SK-N-SH (cell line): ENCODE measurements at regions of chr4 and their contacts with region 1.

Region 1: DNA sequence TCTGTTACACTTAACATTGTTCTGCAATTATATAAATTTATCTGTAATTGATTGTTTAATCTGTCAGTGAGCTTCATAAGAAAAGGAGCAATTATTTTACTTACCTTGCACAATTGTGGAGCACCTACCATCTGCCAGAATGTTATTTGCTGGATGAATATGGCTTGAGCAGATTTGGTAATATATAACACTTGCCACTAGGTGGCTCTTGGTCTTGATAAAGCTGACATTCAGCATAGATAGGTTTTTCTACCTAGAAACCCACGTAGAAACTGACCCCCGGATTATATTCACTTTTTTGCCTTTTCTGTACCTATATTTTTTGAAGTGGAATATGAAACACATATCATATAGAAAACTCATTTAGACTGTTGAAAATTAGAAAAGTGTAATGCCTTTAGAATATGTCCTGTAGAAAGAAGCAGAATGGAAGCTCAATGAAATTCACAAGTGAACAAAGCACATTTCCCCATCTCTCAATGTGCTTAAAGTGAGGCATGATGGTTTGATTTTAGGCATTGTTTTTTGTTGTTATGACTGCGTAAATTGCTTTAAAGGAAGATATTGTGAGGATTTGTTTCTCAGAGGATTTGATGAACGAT is 9.5 kb downstream of the RBPJ start:
- DNase-seq: peak; percentile 51
- H3K4me3 ChIP-seq: no peak overlapping the region
- H3K27ac ChIP-seq: no peak overlapping the region
- H3K4me1 ChIP-seq: no peaks in the 10 kb centered on the region; a peak in 2 of 4 replicates
- H3K27me3 ChIP-seq: no peaks in the 10 kb centered on the region
- CTCF ChIP-seq: peak; percentile 81
- EP300 ChIP-seq: no peak
- RAD21 ChIP-seq: peak; percentile 78

Region 2: DNA sequence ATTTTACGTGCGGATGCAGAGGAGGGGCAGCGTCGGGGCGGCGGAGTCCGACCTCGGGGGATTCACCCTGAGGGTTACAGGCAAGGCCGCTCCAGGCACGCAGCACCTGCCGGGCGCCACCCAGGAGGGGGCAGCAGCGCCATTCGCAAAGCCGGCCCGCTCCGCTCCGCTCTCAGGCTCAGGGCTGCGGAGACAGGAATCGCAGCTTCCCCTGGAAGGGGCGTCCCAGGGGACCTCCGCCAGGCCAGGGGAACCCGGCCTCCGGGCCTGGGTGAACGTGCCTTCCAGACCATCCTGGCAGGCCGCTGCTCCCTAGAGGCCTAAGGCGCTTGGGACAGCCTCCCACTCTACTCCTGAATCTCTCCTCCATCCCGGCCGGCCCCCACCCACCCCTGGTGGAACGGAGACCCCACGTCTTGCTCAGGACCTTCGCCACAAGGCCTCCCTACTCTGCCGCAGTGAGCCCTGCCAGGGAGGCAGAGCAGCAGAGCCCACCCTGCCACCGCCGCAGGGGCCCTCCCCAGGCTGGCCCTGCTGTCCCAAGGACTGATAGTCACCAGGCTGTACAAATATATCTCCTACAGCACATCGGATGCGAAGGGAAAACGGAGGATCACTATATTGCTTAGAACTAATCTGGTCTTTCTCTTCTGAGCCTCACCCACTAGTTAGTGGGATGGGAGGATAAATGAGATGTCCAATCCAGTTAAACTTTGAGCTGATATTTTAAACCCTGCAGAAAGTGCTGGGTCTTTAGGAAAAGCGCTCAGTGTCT is 301.3 kb before region 1 on chr4:
- CTCF ChIA-PET with region 1: interaction called, 11 read pairs
- POLR2A ChIA-PET with region 1: no interaction called
- DNase-seq: peak; percentile 82
- H3K4me3 ChIP-seq: no peak overlapping the region
- H3K27ac ChIP-seq: no peak overlapping the region
- H3K4me1 ChIP-seq: peaks cover 0 to 6% of the 10 kb centered on the region in 2 experiments; a peak in 1 of 4 replicates
- H3K27me3 ChIP-seq: no peaks in the 10 kb centered on the region
- CTCF ChIP-seq: peak; percentile 39
- EP300 ChIP-seq: no peak
- RAD21 ChIP-seq: peak; percentile 77

Region 3: DNA sequence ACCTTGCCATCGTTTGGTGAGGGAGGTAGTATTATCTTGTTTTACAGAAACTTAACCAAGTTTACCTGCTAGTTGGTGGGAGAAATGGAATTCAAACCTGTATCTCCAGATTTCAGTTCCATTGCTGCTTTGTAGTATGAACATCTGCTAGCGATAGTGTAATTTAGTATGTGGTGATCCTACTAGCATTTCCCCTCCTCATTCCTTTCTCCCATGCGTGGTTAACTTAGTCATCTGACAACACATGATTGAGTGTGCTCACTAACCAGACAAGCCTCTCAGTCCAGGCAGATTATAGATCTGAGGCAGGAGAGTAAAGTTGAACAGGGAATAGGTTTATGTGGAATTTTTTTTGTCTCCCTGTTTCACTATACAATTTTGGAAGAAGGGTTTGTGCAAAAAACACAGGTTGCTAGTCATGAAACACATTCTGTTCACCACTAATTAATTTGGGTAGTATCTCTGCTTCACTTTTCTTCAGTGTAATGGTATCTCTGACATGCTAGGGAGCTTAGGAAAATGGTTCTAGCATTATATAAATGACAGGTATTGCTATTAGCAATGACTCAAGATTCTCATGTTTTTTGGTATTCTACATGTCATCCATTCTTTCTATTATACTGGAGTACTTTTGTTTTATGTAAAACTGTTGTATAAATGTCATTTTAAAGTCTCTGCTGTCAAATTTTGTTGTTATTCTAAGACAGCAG is 12.2 kb after region 1 on chr4:
- CTCF ChIA-PET with region 1: interaction called, 65 read pairs
- POLR2A ChIA-PET with region 1: no interaction called
- DNase-seq: no peak
- H3K4me3 ChIP-seq: no peak overlapping the region; a peak in 1 of 4 replicates
- H3K27ac ChIP-seq: peak overlapping the region in 1 of 2 experiments; percentile 66; a peak in 2 of 4 replicates
- H3K4me1 ChIP-seq: peaks cover 0 to 23% of the 10 kb centered on the region in 2 experiments; a peak in 3 of 4 replicates
- H3K27me3 ChIP-seq: no peaks in the 10 kb centered on the region
- CTCF ChIP-seq: no peak
- EP300 ChIP-seq: peak in 1 of 2 experiments; percentile 77; a peak in 2 of 4 replicates
- RAD21 ChIP-seq: no peak

Region 4: GRCh38 chr4:26377328-26378311 is 47.3 kb after region 1 on chr4:
- CTCF ChIA-PET with region 1: interaction called, 13 read pairs
- POLR2A ChIA-PET with region 1: no interaction called
- DNase-seq: no peak
- H3K4me3 ChIP-seq: no peak overlapping the region
- H3K27ac ChIP-seq: no peak overlapping the region
- H3K4me1 ChIP-seq: peaks cover 7 to 8% of the 10 kb centered on the region in 2 experiments; a peak in 3 of 4 replicates
- H3K27me3 ChIP-seq: no peaks in the 10 kb centered on the region
- CTCF ChIP-seq: no peak
- EP300 ChIP-seq: no peak
- RAD21 ChIP-seq: no peak

Region 5: GRCh38 chr4:26402458-26402857 is 72.2 kb after region 1 on chr4:
- CTCF ChIA-PET with region 1: interaction called, 201 read pairs
- POLR2A ChIA-PET with region 1: no interaction called
- DNase-seq: no peak
- H3K4me3 ChIP-seq: no peak overlapping the region
- H3K27ac ChIP-seq: no peak overlapping the region
- H3K4me1 ChIP-seq: no peaks in the 10 kb centered on the region
- H3K27me3 ChIP-seq: no peaks in the 10 kb centered on the region
- CTCF ChIP-seq: no peak
- EP300 ChIP-seq: no peak
- RAD21 ChIP-seq: no peak

Region 6: DNA sequence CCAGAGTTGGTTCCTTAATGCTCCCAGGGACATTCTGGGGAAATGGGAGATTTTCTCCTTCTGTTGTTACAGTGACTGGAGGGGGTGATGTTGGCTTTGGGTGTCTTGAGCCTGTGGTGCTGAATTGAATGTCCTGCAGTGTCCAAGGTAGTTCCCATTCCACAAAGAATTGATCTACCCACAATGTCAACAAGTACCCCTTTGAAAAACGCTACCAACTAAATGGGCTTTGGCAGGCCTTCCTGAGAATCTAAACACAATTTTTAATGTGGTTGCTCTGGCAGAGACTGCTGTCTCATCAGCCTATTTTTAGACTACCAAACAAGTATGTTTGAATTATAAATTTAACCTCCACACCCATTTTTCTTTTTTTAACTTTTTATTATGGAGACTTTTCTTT is 90.6 kb after region 1 on chr4:
- CTCF ChIA-PET with region 1: interaction called, 13 read pairs
- POLR2A ChIA-PET with region 1: no interaction called
- DNase-seq: no peak
- H3K4me3 ChIP-seq: no peak overlapping the region
- H3K27ac ChIP-seq: no peak overlapping the region; a peak in 1 of 4 replicates
- H3K4me1 ChIP-seq: peaks cover 0 to 11% of the 10 kb centered on the region in 2 experiments; a peak in 1 of 4 replicates
- H3K27me3 ChIP-seq: no peaks in the 10 kb centered on the region
- CTCF ChIP-seq: no peak
- EP300 ChIP-seq: no peak
- RAD21 ChIP-seq: no peak